Endothelial cell of umbilical vein (primary cell): ENCODE measurements at regions of chr9 and their contacts with region 1.

Region 1: DNA sequence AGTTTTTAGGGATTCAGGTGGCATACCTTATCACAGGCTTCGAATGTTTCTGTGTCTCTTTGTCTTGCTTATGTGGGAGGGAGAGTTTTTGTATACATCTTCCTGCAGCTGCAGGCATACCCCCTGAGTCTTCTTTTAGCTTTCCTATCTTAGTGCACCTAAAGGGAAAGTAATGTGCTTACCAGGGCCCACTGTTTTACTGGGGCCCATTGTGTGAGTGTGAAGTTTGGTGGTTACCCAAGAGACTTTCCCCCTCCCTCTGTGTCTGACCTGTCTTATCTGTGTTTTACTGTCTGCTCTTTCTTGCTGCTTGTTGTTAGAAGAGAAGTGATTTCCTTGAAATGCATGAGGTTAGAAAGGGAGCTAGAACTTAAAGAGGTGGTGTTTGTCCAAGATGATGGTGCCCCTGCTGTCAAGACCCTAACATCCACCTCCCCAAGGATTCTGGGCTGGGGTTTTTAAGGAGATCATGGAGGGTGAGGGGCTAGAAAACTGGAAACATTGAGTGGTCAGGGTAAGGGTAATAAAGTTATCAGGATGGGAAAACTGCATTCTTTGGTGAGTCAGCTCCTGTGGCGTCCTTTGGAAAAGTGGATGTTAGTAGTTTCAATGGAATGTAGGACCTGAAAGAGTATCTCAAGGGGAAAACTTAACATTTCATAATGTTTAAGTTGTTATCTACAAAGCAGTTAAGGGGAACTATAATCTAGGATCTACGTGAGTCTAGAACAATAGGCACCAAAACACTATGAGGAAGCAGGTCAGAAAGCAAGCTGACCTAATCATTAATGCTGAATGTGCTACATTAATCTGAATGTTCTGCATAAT is 583.5 kb upstream of the TUSC1 start:
- DNase-seq: peak; percentile 93
- H3K4me3 ChIP-seq: no peak overlapping the region
- H3K27ac ChIP-seq: peak overlapping the region; percentile 86
- H3K4me1 ChIP-seq: peaks cover 51% of the 10 kb centered on the region
- H3K27me3 ChIP-seq: no peaks in the 10 kb centered on the region
- CTCF ChIP-seq: no peak
- POLR2A ChIP-seq: no peak

Region 2: GRCh38 chr9:25678162-25678666 is 583.5 kb before region 1 on chr9 and contains the start of gene TUSC1:
- CTCF ChIA-PET with region 1: no interaction called
- POLR2A ChIA-PET with region 1: no interaction called
- dilution Hi-C with region 1: no loop called
- intact Hi-C with region 1: loop called (anchors 2 kb)
- DNase-seq: peak; percentile 83
- H3K4me3 ChIP-seq: peak within 1 kb of the TSS; percentile 40 to 70 (median 68)
- H3K27ac ChIP-seq: peak within 1 kb of the TSS; percentile 67
- H3K4me1 ChIP-seq: peaks cover 18% of the 10 kb centered on the region
- H3K27me3 ChIP-seq: no peaks in the 10 kb centered on the region
- CTCF ChIP-seq: no peak
- POLR2A ChIP-seq: no peak
- total RNA-seq, gene TUSC1: 12.1 TPM in 2 replicates

Region 3: DNA sequence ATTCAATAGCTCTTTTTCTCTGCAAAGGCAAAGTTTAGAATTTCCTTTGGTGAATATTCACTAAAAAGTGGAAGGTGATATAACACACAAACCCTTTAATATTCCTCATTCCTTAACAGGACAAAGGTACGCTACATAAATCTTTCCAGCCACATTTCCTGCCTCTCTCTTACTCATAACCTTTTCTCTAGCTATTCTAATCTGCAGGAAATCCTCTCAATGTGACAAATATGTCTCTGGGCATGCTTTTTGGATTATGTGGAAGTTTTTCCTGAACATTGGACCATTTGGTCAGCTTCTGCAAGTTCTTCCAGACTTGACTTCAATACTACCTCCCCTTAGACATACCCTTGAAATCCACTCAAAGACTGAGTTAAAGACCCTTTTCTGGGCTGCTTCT is 397.2 kb before region 1 on chr9:
- CTCF ChIA-PET with region 1: interaction called, 3 read pairs
- POLR2A ChIA-PET with region 1: no interaction called
- dilution Hi-C with region 1: no loop called
- intact Hi-C with region 1: loop called (anchors 1 kb)
- DNase-seq: peak; percentile 90
- H3K4me3 ChIP-seq: peak overlapping the region in 1 of 3 experiments; percentile 6
- H3K27ac ChIP-seq: peak overlapping the region; percentile 87
- H3K4me1 ChIP-seq: peaks cover 24% of the 10 kb centered on the region
- H3K27me3 ChIP-seq: no peaks in the 10 kb centered on the region
- CTCF ChIP-seq: no peak
- POLR2A ChIP-seq: peak; percentile 41

Region 4: GRCh38 chr9:25964239-25964638 is 297.5 kb before region 1 on chr9:
- CTCF ChIA-PET with region 1: interaction called, 4 read pairs
- POLR2A ChIA-PET with region 1: no interaction called
- dilution Hi-C with region 1: no loop called
- intact Hi-C with region 1: loop called (anchors 2 kb)
- DNase-seq: peak; percentile 70
- H3K4me3 ChIP-seq: no peak overlapping the region
- H3K27ac ChIP-seq: no peak overlapping the region
- H3K4me1 ChIP-seq: no peaks in the 10 kb centered on the region
- H3K27me3 ChIP-seq: no peaks in the 10 kb centered on the region
- CTCF ChIP-seq: peak; percentile 53 to 57
- POLR2A ChIP-seq: no peak

Region 5: DNA sequence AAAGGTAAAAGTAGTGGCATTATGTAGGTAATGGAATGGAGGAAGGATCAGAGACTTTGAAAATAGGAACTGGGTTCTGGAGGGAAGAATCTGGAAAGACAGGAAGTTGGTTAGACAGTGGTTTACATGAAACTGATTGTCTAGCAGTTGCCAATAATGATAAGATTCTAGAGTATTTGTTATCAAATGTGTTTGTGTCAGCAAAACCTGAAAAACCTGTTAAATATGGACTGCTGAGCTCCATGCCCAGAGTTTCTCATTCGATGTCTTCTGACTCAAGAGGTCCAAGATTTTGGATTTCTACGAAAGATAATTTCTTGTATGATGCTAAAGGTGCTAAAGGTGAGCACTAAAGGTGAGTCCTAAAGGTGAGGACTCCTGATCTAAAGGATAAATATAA is 68.5 kb before region 1 on chr9:
- CTCF ChIA-PET with region 1: no interaction called
- POLR2A ChIA-PET with region 1: no interaction called
- dilution Hi-C with region 1: no loop called
- intact Hi-C with region 1: no loop called
- DNase-seq: no peak
- H3K4me3 ChIP-seq: no peak overlapping the region
- H3K27ac ChIP-seq: no peak overlapping the region
- H3K4me1 ChIP-seq: no peaks in the 10 kb centered on the region
- H3K27me3 ChIP-seq: no peaks in the 10 kb centered on the region
- CTCF ChIP-seq: no peak
- POLR2A ChIP-seq: no peak

Region 6: DNA sequence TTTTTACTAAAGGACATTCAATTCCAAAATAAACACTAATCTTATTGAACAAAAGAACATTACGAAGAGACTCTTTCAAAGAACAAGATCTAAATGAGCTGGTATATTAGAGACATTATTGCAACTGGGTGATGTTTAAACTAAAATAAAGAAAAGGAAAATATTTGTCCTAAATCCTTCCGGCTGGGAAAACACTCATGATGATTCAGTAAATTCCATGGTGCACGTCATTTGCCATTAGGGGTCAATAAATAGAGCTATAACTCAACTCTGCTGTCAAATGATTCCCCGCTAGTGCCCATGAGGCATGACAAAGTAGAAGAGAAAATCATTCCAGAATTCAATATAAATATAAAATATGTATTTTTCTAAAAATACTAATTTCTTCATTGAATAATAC is 18.0 kb before region 1 on chr9:
- CTCF ChIA-PET with region 1: interaction called, 11 read pairs
- POLR2A ChIA-PET with region 1: interaction called, 4 read pairs
- dilution Hi-C with region 1: no loop called
- intact Hi-C with region 1: loop called (anchors 1 kb)
- DNase-seq: peak; percentile 86
- H3K4me3 ChIP-seq: no peak overlapping the region
- H3K27ac ChIP-seq: peak overlapping the region; percentile 92
- H3K4me1 ChIP-seq: peaks cover 32% of the 10 kb centered on the region
- H3K27me3 ChIP-seq: no peaks in the 10 kb centered on the region
- CTCF ChIP-seq: no peak
- POLR2A ChIP-seq: no peak

Region 7: GRCh38 chr9:26301659-26302058 is 39.9 kb after region 1 on chr9:
- CTCF ChIA-PET with region 1: no interaction called
- POLR2A ChIA-PET with region 1: no interaction called
- dilution Hi-C with region 1: no loop called
- intact Hi-C with region 1: loop called (anchors 2 kb)
- DNase-seq: no peak
- H3K4me3 ChIP-seq: no peak overlapping the region
- H3K27ac ChIP-seq: no peak overlapping the region
- H3K4me1 ChIP-seq: peaks cover 16% of the 10 kb centered on the region
- H3K27me3 ChIP-seq: no peaks in the 10 kb centered on the region
- CTCF ChIP-seq: no peak
- POLR2A ChIP-seq: no peak